Endothelial cell of umbilical vein (primary cell): ENCODE measurements at regions of chr9 and their contacts with region 1.

Region 1: DNA sequence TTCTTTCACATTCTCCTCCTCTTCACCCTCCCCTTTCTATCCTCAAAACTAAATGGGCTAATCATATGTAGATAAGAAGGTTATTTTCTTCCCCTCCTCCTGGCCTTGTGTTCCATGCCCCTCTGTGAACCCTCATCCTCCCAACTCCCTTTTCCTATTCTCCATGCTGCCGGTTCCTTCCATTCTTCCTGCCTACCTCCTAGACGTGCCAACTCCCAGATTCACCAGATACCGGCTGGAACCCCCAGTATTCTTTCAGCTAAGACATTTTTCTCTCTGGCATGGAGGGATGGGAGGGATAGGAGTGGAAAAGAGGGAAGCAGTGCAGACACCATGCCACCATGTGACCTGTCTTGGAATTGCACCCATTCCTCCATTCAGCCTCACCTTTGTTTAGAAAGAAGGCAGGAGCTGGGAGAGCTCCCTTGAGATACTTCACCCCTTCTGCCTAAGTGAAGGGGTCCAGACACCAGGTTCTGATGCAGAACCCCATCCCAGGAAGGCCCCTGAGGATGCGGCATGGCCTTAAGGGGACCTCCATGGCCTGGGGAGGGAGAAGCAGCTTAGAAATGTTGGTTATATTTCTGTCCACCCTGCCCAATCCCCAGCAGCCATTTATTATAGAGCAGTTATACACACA is 4.8 kb downstream of the DNAJB5 start:
- DNase-seq: peak; percentile 64
- H3K4me3 ChIP-seq: no peak overlapping the region
- H3K27ac ChIP-seq: peak overlapping the region; percentile 79
- H3K4me1 ChIP-seq: peaks cover 42% of the 10 kb centered on the region
- H3K27me3 ChIP-seq: no peaks in the 10 kb centered on the region
- CTCF ChIP-seq: peak; percentile 67 to 71
- POLR2A ChIP-seq: no peak

Region 2: DNA sequence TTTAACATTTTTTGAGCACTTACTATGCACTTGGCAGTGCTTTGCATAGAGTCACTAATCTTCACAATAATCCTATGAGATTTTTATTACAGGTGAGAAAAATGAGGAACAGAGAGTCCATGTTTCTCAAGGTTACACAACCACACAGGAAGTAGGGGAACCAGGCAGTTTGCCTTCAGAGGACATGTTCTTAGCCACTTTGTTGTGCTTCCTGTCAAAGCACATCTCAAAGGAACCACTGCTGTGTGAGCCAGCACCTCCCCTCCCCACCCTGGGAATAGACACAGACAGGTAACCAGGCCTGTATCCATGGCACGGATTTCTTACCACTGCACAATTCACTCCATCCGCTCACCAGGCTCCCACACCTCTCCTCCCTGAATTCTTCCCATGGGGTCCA is 11.2 kb before region 1 on chr9:
- CTCF ChIA-PET with region 1: interaction called, 59 read pairs
- POLR2A ChIA-PET with region 1: no interaction called
- dilution Hi-C with region 1: no loop called
- intact Hi-C with region 1: no loop called
- DNase-seq: no peak
- H3K4me3 ChIP-seq: no peak overlapping the region
- H3K27ac ChIP-seq: no peak overlapping the region
- H3K4me1 ChIP-seq: no peaks in the 10 kb centered on the region
- H3K27me3 ChIP-seq: peaks cover 0 to 5% of the 10 kb centered on the region in 2 experiments
- CTCF ChIP-seq: no peak
- POLR2A ChIP-seq: no peak

Region 3: DNA sequence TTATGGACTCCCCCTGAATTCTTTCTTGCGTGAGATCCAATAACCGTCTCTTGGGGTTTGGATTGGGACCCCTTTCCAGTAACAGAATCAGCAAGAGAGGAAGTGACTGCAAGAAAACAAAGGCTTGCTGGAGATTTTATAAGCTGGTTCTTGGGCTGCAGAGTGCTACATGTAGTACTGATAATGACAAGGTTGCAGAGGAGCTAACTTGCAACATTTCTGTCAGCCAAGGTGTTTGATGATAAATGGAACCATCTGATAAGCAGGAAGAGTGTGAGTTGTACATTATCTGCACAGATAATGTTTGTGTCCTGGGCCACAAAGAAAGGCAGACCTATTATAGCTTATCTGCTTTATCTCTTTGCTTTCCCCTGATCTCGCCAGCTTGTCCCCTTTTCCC is 32.3 kb after region 1 on chr9:
- CTCF ChIA-PET with region 1: interaction called, 10 read pairs
- POLR2A ChIA-PET with region 1: no interaction called
- dilution Hi-C with region 1: no loop called
- intact Hi-C with region 1: no loop called
- DNase-seq: peak; percentile 19
- H3K4me3 ChIP-seq: no peak overlapping the region
- H3K27ac ChIP-seq: no peak overlapping the region
- H3K4me1 ChIP-seq: peaks cover 9% of the 10 kb centered on the region
- H3K27me3 ChIP-seq: no peaks in the 10 kb centered on the region
- CTCF ChIP-seq: no peak
- POLR2A ChIP-seq: no peak